ENCODE measurements at regions of chr1 and their contacts with region 1.

Region 1: GRCh38 chr1:40161125-40161887 is at the start of gene RLF:
- DNase-seq: peak; percentile 90 to 99 (median 94)

Region 2: GRCh38 chr1:40178200-40178599 is 16.9 kb after region 1 on chr1:
- intact Hi-C with region 1: no loop called
- DNase-seq: no peak

Region 3: GRCh38 chr1:40257688-40258444 is 96.6 kb after region 1 on chr1 and contains the start of gene ZMPSTE24:
- intact Hi-C with region 1: loop called (anchors 1 kb)
- DNase-seq: peak; percentile 93 to 99 (median 95)

Measured in posterior cingulate gyrus (tissue), 11 donors.